ENCODE measurements at regions of chr7 and their contacts with region 1.

Region 1: GRCh38 chr7:123343611-123344010 is 143.8 kb upstream of the SLC13A1 start:
- DNase-seq: no peak
- ATAC-seq: no peak
- H3K4me3 ChIP-seq: no peak overlapping the region
- H3K4me3 Mint-ChIP-seq: no peak overlapping the region
- H3K27ac ChIP-seq: no peak overlapping the region
- H3K27ac Mint-ChIP-seq: no peak overlapping the region
- H3K4me1 ChIP-seq: no peaks in the 10 kb centered on the region
- H3K4me1 Mint-ChIP-seq: no peaks in the 10 kb centered on the region
- H3K27me3 ChIP-seq: no peaks in the 10 kb centered on the region
- H3K27me3 Mint-ChIP-seq: no peaks in the 10 kb centered on the region
- CTCF ChIP-seq: no peak

Region 2: DNA sequence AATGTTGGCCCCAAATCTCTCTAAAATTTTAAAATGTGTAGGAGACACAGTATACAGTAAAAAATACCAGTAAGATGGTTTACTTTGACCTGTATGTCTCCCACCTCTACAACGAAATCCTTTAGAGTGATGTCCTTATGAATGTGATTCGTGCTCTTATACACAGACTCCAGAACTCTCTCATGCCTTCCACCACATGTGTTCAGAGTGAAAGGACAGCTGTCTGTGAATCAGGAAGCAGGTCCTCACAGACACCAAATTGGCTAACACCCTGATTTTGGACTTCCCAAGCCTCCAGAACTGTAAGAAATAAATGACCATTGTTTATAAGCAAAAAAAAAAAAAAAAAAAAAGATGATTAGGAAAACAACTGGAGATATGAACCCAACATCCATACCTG is 679.9 kb before region 1 on chr7:
- CTCF ChIA-PET with region 1: no interaction called
- POLR2A ChIA-PET with region 1: no interaction called
- intact Hi-C with region 1: loop called in 1 of 2 experiments (anchors 5 kb)
- DNase-seq: no peak
- ATAC-seq: no peak
- H3K4me3 ChIP-seq: no peak overlapping the region
- H3K4me3 Mint-ChIP-seq: no peak overlapping the region
- H3K27ac ChIP-seq: no peak overlapping the region
- H3K27ac Mint-ChIP-seq: no peak overlapping the region
- H3K4me1 ChIP-seq: no peaks in the 10 kb centered on the region
- H3K4me1 Mint-ChIP-seq: no peaks in the 10 kb centered on the region
- H3K27me3 ChIP-seq: no peaks in the 10 kb centered on the region
- H3K27me3 Mint-ChIP-seq: no peaks in the 10 kb centered on the region
- CTCF ChIP-seq: no peak

Region 3: DNA sequence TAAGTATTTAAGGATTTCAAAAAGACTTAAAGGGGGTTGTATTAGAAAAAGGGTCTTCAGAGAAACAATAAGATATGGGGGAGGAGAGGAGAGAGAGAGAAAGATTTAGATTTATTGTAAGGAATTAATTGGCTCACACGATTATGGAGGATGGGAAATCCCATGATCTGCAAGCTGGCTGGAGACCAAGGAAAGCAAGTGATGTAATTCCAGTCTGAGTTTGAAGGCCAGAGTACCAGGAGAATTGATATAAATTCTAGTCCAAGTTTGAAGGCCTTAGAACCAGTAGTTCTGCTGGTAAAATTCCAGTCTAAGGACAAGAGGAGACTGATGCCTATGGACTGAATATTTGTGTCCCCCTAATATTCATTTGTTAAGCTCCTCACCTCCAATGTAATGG is 123.2 kb before region 1 on chr7:
- CTCF ChIA-PET with region 1: no interaction called
- POLR2A ChIA-PET with region 1: no interaction called
- intact Hi-C with region 1: no loop called
- DNase-seq: no peak
- ATAC-seq: no peak
- H3K4me3 ChIP-seq: no peak overlapping the region
- H3K4me3 Mint-ChIP-seq: no peak overlapping the region
- H3K27ac ChIP-seq: no peak overlapping the region
- H3K27ac Mint-ChIP-seq: no peak overlapping the region
- H3K4me1 ChIP-seq: no peaks in the 10 kb centered on the region
- H3K4me1 Mint-ChIP-seq: no peaks in the 10 kb centered on the region
- H3K27me3 ChIP-seq: no peaks in the 10 kb centered on the region
- H3K27me3 Mint-ChIP-seq: no peaks in the 10 kb centered on the region
- CTCF ChIP-seq: no peak

Region 4: DNA sequence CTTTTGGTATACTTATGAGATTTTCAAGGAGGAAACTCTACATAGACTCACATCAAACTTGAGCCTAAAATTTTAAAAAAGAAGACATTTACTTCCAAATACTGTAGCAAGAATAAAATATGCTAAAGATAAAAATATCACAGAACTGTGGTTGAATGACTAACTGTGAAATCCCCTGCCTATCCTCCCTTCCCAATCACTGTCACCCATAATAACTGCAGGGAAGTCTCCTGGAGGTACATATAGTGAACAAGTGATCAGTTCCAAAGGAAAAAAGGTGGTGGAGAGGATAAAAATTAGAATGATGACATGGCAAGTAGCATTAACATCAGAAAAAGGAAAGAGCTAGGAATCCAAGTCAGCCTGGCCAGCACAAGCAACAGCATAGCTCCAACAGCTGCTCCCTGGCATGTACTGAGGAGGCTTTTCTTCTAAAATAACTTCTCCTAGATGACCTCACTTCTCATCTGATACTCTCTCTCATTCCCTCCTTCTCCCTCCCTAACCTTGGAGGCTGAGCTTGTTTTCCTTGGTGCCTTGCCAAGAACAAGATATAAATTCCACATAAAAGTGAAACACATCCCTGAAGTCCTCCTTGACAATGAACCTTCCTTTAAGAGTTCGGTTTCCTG is 66.8 kb after region 1 on chr7:
- CTCF ChIA-PET with region 1: no interaction called
- POLR2A ChIA-PET with region 1: no interaction called
- intact Hi-C with region 1: no loop called
- DNase-seq: no peak
- ATAC-seq: no peak
- H3K4me3 ChIP-seq: no peak overlapping the region
- H3K4me3 Mint-ChIP-seq: no peak overlapping the region
- H3K27ac ChIP-seq: no peak overlapping the region
- H3K27ac Mint-ChIP-seq: no peak overlapping the region
- H3K4me1 ChIP-seq: no peaks in the 10 kb centered on the region
- H3K4me1 Mint-ChIP-seq: no peaks in the 10 kb centered on the region
- H3K27me3 ChIP-seq: no peaks in the 10 kb centered on the region
- H3K27me3 Mint-ChIP-seq: no peaks in the 10 kb centered on the region
- CTCF ChIP-seq: no peak

Measured in CD8-positive, alpha-beta T cell (primary cell).